PC-9 (cell line): ENCODE measurements at regions of chr1 and their contacts with region 1.

Region 1: DNA sequence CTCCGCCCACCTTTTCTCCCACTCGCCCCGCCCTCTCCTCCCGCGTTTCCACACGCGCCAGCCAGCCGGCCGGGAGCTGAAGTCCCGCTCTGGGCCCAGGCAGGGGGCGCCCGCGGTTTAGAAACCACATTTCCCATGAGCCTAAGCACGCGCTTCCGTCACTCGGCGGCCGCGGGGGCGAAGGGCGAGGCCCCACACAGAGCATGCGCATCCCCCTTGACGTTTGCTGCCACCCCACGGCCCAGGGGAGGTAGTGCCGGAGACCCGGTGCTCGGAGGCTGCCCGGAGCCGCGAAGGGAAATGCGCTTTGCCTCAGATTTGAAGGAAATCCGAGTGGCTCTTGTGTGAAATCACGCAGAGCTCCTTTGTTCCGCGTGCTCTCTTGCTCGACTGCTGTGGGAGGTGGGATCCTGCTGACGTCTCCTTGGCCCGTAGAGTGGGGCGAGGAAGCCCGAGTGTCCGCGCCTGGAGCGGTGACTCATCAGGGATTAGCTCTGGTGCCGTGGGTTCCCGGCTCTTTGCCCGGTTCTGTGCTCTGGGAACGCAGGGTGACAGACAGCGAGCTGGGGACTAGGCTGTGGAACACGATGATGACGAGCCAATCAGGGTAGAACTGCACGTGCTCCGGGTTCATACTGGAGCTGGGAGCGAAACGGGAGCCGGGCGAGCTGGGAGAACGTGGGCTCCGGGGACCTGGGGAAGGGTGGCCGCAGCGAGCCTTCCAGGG is 407 bp upstream of the B3GALNT2 start:
- DNase-seq: peak; percentile 93 to 100
- H3K4me3 ChIP-seq: peak overlapping the region; percentile 77
- H3K27ac ChIP-seq: peak overlapping the region; percentile 97
- H3K4me1 ChIP-seq: peaks cover 38% of the 10 kb centered on the region
- H3K27me3 ChIP-seq: no peaks in the 10 kb centered on the region
- CTCF ChIP-seq: peak; percentile 86

Region 2: GRCh38 chr1:235100194-235100772 is 404.4 kb before region 1 on chr1:
- CTCF ChIA-PET with region 1: no interaction called
- POLR2A ChIA-PET with region 1: no interaction called
- intact Hi-C with region 1: loop called (anchors 5 kb)
- DNase-seq: no peak
- H3K4me3 ChIP-seq: no peak overlapping the region
- H3K27ac ChIP-seq: no peak overlapping the region
- H3K4me1 ChIP-seq: no peaks in the 10 kb centered on the region
- H3K27me3 ChIP-seq: no peaks in the 10 kb centered on the region
- CTCF ChIP-seq: no peak

Region 3: GRCh38 chr1:235367000-235367908 is 137.4 kb before region 1 on chr1 and contains the start of gene TBCE:
- CTCF ChIA-PET with region 1: no interaction called
- POLR2A ChIA-PET with region 1: no interaction called
- intact Hi-C with region 1: loop called (anchors 5 kb)
- DNase-seq: peak; percentile 98 to 99
- H3K4me3 ChIP-seq: peak within 1 kb of the TSS; percentile 82
- H3K27ac ChIP-seq: peak within 1 kb of the TSS; percentile 84
- H3K4me1 ChIP-seq: peaks cover 22% of the 10 kb centered on the region
- H3K27me3 ChIP-seq: no peaks in the 10 kb centered on the region
- CTCF ChIP-seq: no peak; the same call in 1 of the 2 replicates
- total RNA-seq, gene TBCE: 18.9 and 22.8 TPM in 2 replicates

Region 4: DNA sequence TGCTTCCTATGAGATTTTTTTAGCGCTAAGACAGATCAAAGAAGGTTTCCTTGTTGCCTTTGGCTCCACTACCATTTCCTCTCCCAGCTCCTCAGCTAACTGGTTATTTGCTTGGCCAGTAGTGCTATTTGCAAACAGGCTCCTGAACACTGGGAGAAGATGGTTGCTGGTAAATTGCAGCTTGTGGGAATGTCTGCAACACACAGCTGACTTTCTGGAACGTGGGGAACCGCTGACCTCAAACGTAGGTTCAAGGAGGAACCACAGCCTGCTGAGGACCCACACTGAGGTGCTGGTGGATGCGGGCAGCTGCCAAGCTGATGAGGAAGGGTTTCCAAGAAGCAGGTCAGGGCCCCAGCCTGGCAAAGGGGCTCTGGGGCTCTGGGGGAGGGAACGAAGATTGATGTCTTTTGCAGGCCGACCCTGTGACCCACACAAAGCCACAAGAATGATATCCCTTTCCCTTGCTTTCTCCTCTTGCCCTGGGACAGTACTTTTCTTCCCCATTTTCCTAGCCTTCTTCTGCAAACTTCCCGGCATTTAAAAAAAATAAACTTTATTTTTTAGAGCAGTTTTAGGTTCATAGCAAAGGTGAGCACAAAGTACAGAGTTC is 120.2 kb after region 1 on chr1:
- CTCF ChIA-PET with region 1: no interaction called
- POLR2A ChIA-PET with region 1: no interaction called
- intact Hi-C with region 1: no loop called
- DNase-seq: no peak
- H3K4me3 ChIP-seq: no peak overlapping the region
- H3K27ac ChIP-seq: no peak overlapping the region
- H3K4me1 ChIP-seq: peaks cover 12% of the 10 kb centered on the region
- H3K27me3 ChIP-seq: no peaks in the 10 kb centered on the region
- CTCF ChIP-seq: no peak

Region 5: DNA sequence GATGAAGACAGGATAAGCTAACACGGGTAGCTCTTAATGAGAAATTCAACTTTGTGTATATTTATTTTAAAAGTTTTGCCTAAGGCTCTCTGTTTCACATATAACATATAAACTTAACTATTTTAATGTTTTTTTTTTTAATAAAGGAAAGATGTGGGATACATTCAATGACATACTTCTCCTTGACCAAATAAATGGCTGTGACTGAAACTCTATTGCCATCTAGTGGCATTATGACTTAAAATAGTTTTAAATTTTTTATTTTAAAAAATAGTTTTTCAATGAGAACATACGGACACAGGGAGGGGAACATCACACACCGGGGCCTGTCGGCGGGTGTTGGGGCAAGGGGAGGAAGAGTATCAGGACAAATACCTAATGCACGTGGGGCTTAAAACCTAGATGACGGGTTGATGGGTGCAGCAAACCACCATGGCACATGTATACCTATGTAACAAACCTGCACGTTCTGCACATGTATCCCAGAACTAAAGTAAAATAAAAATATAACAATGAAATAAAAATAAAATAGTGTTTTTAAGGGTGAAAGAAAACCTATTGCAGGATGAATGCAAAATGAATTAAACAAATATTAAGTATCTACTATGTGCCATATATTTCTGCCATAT is 278.6 kb after region 1 on chr1:
- CTCF ChIA-PET with region 1: interaction called, 14 read pairs
- POLR2A ChIA-PET with region 1: interaction called, 4 read pairs
- intact Hi-C with region 1: loop called (anchors 2 kb)
- DNase-seq: peak; percentile 9 to 52
- H3K4me3 ChIP-seq: no peak overlapping the region
- H3K27ac ChIP-seq: no peak overlapping the region
- H3K4me1 ChIP-seq: 0 out of 2 replicates have a peak, but pooled peaks cover 4% of the 10 kb centered on the region
- H3K27me3 ChIP-seq: no peaks in the 10 kb centered on the region
- CTCF ChIP-seq: peak; percentile 71

Region 6: GRCh38 chr1:235933017-235933765 is 428.5 kb after region 1 on chr1:
- CTCF ChIA-PET with region 1: no interaction called
- POLR2A ChIA-PET with region 1: interaction called, 5 read pairs
- intact Hi-C with region 1: loop called (anchors 5 kb)
- DNase-seq: no peak
- H3K4me3 ChIP-seq: no peak overlapping the region
- H3K27ac ChIP-seq: peak overlapping the region; percentile 61; the same call in 1 of the 2 replicates
- H3K4me1 ChIP-seq: peaks cover 42% of the 10 kb centered on the region
- H3K27me3 ChIP-seq: no peaks in the 10 kb centered on the region
- CTCF ChIP-seq: no peak